ENCODE measurements at regions of chr6 and their contacts with region 1.

Region 1: GRCh38 chr6:145734486-145735355 is 599 bp downstream of the EPM2A start:
- DNase-seq: peak; percentile 78
- H3K4me3 ChIP-seq: peak overlapping the region; percentile 91
- H3K27ac ChIP-seq: peak overlapping the region; percentile 86
- H3K4me1 ChIP-seq: peaks cover 21% of the 10 kb centered on the region
- CTCF ChIP-seq: no peak

Region 2: GRCh38 chr6:145745861-145746260 is 11.1 kb after region 1 on chr6:
- CTCF ChIA-PET with region 1: interaction called, 3 read pairs
- POLR2A ChIA-PET with region 1: interaction called, 12 read pairs
- intact Hi-C with region 1: no loop called
- DNase-seq: no peak
- H3K4me3 ChIP-seq: no peak overlapping the region
- H3K27ac ChIP-seq: no peak overlapping the region
- H3K4me1 ChIP-seq: peaks cover 5% of the 10 kb centered on the region
- CTCF ChIP-seq: no peak

Region 3: GRCh38 chr6:145866456-145867396 is 132.0 kb after region 1 on chr6:
- CTCF ChIA-PET with region 1: no interaction called
- POLR2A ChIA-PET with region 1: interaction called, 17 read pairs
- intact Hi-C with region 1: loop called (anchors 1 kb)
- DNase-seq: peak; percentile 77
- H3K4me3 ChIP-seq: peak overlapping the region; percentile 58
- H3K27ac ChIP-seq: peak overlapping the region; percentile 96
- H3K4me1 ChIP-seq: peaks cover 83% of the 10 kb centered on the region
- CTCF ChIP-seq: no peak

Region 4: DNA sequence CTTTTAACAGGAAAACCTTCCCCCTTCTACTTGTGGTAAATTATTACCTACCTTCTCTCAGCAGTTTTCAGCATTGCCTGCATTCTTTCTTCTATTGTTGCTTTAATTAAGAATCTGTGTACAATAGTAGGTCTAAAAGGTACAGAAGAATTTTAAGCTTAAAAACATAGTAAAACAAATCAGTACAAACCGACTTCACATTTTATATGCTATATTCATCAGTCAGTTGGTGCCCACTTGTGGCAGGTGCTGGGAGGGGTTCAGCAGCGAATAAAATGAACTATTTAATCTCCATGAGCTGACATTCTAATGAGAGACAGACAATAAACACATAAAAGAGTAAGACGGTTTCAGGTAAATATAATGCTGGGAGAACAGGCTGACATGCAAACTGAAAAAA is 153.2 kb after region 1 on chr6:
- CTCF ChIA-PET with region 1: no interaction called
- POLR2A ChIA-PET with region 1: interaction called, 3 read pairs
- intact Hi-C with region 1: loop called (anchors 5 kb)
- DNase-seq: peak; percentile 64
- H3K4me3 ChIP-seq: no peak overlapping the region
- H3K27ac ChIP-seq: no peak overlapping the region
- H3K4me1 ChIP-seq: peaks cover 7% of the 10 kb centered on the region
- CTCF ChIP-seq: peak; percentile 98

Region 5: DNA sequence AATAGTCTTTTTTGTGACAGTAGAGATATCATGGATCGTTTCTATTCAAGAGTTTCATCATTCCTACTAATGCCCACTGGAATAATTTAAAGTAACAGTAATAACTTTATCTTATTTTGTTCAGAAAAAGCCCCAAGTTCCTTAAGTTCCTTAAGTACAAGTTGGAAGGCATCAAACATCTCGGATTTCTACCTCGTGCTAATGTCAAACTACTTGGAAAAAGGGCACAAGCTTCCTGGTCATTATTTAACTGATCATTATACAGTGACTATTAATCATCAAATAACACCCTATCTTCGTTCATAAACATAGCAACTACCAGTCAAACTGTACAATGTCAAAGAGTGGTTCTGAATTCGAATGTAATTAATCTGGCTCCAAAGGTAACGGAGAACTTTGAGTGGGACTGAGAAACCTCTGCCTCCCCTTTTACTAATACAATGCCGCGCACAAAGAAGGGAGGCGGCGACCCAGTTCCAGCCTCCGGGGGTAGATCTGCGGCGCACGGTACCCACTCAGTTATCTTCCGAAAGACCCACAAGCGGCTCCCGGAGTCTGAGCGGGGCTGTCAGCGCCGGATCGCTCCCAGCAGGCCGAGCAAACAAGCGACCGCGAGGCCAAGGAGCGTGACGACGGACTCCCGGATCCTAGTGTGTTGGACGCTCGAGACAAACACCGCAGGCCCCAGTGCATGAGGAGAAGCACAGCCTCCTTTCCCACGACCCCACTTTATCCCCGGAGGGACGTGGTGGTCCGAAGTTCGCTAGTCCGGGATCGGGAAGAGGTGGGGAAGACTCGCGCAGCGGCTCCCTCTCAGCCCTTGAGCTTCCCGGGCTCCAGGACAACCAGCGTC is 228.7 kb after region 1 on chr6:
- CTCF ChIA-PET with region 1: no interaction called
- POLR2A ChIA-PET with region 1: interaction called, 6 read pairs
- intact Hi-C with region 1: loop called (anchors 2 kb)
- DNase-seq: peak; percentile 65
- H3K4me3 ChIP-seq: peak overlapping the region; percentile 84
- H3K27ac ChIP-seq: peak overlapping the region; percentile 40
- H3K4me1 ChIP-seq: peaks cover 41% of the 10 kb centered on the region
- CTCF ChIP-seq: no peak

Region 6: GRCh38 chr6:146169872-146170271 is 435.2 kb after region 1 on chr6:
- CTCF ChIA-PET with region 1: no interaction called
- POLR2A ChIA-PET with region 1: no interaction called
- intact Hi-C with region 1: no loop called
- DNase-seq: no peak
- H3K4me3 ChIP-seq: no peak overlapping the region
- H3K27ac ChIP-seq: no peak overlapping the region
- H3K4me1 ChIP-seq: no peaks in the 10 kb centered on the region
- CTCF ChIP-seq: no peak

Measured in OCI-LY7 (cell line).